Right cardiac atrium (tissue), 5 donors: ENCODE measurements at regions of chr3 and their contacts with region 1.

Region 1: DNA sequence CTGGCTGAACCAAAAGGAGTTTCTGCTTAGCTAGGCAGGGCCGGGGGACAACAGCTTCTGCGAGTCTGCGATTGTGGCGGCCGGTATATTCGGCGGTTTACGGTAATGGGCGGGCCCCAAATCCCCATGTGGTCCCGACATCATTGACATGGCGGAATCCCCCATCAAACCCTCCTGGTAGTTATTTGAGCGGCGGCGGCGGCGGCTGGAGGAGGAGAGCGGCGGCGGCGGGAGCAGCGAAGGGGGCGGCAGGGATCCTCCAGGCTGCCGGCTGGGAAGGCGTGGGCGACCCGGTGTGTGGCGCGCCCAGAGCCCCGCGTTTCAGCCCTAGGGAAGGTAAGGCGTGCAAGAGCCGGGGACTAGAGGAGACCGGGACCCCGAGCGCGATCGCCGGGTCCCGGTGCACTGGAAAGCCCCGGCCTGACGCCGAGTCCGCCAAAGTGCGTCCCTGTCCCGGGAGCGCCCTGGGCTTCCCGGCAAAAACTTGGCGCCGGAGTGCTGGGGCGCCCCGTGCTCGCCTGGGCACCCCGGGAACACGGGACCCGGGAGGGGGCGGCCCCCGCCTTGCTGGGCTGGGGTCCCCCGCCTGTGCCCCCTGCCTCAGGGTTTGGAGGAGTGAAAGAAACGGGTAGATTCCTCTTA is at the start of gene FNDC3B:
- DNase-seq: peak; percentile 95 to 97 (median 97)
- ATAC-seq: peak; percentile 93 to 94
- H3K4me3 ChIP-seq: peak within 1 kb of the TSS; percentile 86
- H3K27ac ChIP-seq: peak within 1 kb of the TSS; percentile 96
- H3K4me1 ChIP-seq: peaks cover 7% of the 10 kb centered on the region
- H3K27me3 ChIP-seq: no peaks in the 10 kb centered on the region
- total RNA-seq, gene FNDC3B: 82.9 to 117 (median 84.9) TPM

Region 2: DNA sequence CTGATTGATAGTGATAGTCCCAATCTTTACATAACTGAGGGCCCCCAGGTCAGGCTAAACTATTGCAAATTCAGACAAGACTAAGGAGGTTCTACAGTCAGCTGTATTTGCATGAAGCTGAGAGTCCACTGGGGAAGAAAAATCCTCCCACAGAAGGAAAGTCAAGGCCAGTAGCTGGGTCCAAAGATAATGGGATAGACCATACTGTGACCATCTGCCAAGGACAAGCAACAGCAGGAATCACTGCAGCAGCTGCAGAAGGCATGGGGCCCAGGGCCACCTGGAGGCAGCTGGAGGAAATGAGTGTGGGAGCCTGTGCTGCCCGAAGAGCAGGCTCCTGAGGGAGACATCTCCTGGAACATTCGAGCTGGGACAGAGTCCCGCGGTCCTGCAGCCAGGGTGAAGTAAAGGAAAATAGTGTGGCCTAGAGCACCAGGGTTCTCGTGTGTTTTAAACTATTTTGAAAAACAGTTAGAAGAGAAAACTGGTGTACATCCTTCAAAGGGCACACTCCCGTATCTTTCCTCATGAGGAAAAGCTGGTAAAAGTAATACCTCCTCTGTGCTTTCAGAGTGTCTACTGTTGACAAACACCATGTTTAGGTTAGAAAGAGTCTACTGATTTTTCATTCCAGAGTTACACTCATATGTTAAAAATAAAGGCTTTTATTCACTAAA is 209.6 kb before region 1 on chr3:
- intact Hi-C with region 1: loop called in 1 of 4 experiments (anchors 10 kb)
- DNase-seq: peak; percentile 82 to 94 (median 93)
- ATAC-seq: peak; percentile 93 to 94
- H3K4me3 ChIP-seq: no peak overlapping the region
- H3K27ac ChIP-seq: peak overlapping the region; percentile 30
- H3K4me1 ChIP-seq: peaks cover 3% of the 10 kb centered on the region
- H3K27me3 ChIP-seq: no peaks in the 10 kb centered on the region

Region 3: DNA sequence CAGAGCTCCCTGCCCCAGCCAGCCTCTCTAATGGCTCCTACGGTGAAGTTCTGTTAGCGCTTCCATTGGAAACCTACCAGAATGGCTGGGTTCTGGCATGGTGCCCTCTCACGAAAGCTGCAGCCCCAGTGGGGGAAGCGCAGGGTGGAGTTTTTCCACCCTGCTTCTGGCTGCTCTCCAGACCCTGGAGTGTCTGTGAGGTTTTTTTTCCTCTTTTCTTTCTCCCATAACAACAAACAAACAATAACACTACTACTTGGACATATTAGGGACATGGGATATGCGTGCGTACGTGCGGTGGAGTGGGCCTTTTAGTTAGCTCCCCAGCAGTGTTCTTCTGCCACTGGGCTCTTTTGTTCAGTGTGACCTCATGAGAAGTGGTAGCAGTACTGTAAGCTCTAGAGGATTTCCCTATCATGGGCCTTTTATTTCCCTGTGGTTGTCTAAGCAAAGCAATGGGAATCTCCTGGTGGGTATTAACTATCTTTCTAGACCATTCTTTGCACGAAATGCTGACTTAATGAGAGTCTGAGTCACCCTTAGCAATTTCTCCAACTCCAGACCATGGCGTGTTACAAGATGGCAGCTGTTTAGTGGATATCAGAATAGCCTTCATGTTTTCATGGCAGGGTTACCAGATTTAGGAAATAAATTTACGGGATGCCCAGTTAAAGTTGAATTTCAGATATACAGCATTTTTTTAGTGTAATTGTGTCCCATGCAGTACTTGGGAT is 161.7 kb after region 1 on chr3:
- intact Hi-C with region 1: loop called in 1 of 4 experiments (anchors 10 kb)
- DNase-seq: peak; percentile 90 to 94 (median 93)
- ATAC-seq: peak; percentile 92 to 93
- H3K4me3 ChIP-seq: peak overlapping the region; percentile 11
- H3K27ac ChIP-seq: peak overlapping the region; percentile 90
- H3K4me1 ChIP-seq: peaks cover 4% of the 10 kb centered on the region
- H3K27me3 ChIP-seq: no peaks in the 10 kb centered on the region

Region 4: DNA sequence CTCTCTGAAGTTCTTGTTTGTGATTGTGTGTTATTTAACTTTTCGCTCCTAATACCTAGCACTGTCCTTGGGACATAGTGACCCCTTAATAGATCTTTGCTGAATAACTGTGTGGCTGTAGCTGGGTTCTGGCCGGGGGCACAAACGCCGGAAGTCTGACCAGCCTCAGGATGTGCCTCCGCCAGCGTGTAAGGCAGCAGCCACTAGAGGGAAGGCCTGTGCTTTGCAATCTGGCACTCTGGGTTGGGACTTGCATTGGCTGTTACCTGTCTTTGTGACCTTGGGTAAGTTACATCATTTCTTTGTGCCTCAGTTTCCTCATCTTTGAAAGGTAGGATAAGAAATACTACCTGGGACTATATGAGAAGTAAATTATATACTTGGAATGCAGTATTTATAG is 250.0 kb after region 1 on chr3:
- intact Hi-C with region 1: loop called in 2 of 4 experiments (anchors 10 kb)
- DNase-seq: peak; percentile 27 to 67 (median 60)
- ATAC-seq: peak; percentile 11 to 71
- H3K4me3 ChIP-seq: no peak overlapping the region
- H3K27ac ChIP-seq: peak overlapping the region; percentile 14
- H3K4me1 ChIP-seq: peaks cover 15% of the 10 kb centered on the region
- H3K27me3 ChIP-seq: no peaks in the 10 kb centered on the region

Region 5: DNA sequence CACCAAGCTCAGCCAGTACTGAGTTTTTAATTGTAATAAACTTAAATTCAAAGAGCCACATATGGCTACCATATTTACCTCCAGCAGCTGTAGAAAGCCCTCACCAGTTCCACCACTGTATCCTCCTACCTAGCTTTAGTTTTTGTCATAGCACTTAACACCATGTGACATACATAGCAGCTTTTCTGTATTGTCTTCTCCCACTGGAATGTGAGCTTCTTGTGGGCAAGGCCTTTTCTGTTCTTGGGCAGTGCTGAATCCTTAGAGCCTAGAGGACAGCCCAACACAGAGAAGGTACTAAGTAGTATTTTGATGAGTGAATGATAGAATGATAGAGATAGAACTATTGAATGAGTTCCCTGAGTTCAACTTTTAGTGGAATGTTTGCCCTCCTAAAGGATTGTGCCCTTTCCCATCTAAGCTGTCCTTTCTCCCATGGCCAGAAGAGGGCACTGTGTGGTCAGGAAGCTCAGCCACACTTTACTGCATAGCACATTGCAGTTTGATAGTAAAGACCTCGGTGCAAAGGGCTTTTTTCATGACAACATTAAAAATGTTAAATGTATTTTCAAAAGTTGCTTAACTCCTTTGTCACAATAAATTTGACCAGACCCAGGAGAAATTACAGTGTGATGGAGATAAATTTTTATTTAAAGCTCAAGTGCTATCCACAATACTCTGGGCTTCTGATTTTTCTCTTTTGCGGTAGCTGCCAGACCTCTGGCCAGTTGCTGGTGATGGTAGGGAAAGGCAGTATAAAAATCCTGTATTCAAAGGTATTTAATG is 292.9 kb after region 1 on chr3:
- intact Hi-C with region 1: loop called in 3 of 4 experiments (anchors 10 kb)
- DNase-seq: peak in 2 of 3 donors; percentile 43 to 77
- ATAC-seq: peak; percentile 86 to 88
- H3K4me3 ChIP-seq: no peak overlapping the region
- H3K27ac ChIP-seq: no peak overlapping the region
- H3K4me1 ChIP-seq: no peaks in the 10 kb centered on the region
- H3K27me3 ChIP-seq: no peaks in the 10 kb centered on the region